ENCODE measurements at regions of chr13 and their contacts with region 1.

Region 1: DNA sequence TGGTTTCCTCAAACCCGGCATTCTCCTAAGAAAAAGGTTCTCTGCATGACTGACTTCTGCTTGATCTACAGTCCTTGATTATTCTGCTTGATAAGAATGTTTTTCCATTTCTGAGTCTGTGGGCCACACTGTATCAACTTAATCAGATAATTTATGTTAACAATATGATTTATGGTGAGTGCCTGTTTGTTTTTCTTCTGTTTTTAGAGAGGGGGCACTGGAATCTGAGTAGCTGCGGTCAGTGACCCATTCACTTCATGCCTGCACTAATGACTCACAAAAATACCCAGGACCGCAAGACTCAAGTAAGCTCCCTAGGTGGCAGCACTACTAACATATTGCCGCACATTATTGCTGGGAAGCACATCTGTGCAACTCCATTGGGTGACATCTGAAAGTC is 542.3 kb upstream of the ATXN8OS start:
- DNase-seq: peak; percentile 54 to 58
- H3K4me3 ChIP-seq: no peak overlapping the region
- H3K4me3 Mint-ChIP-seq: no peak overlapping the region
- H3K27ac Mint-ChIP-seq: no peak overlapping the region
- H3K4me1 ChIP-seq: no peaks in the 10 kb centered on the region
- H3K4me1 Mint-ChIP-seq: no peaks in the 10 kb centered on the region
- H3K27me3 ChIP-seq: no peaks in the 10 kb centered on the region
- H3K27me3 Mint-ChIP-seq: no peaks in the 10 kb centered on the region
- CTCF ChIP-seq: peak; percentile 52 to 63

Region 2: GRCh38 chr13:69579351-69579750 is 14.0 kb after region 1 on chr13:
- CTCF ChIA-PET with region 1: no interaction called
- POLR2A ChIA-PET with region 1: no interaction called
- intact Hi-C with region 1: loop called (anchors 2 kb)
- DNase-seq: no peak
- H3K4me3 ChIP-seq: no peak overlapping the region
- H3K4me3 Mint-ChIP-seq: no peak overlapping the region
- H3K27ac Mint-ChIP-seq: no peak overlapping the region
- H3K4me1 ChIP-seq: no peaks in the 10 kb centered on the region
- H3K4me1 Mint-ChIP-seq: no peaks in the 10 kb centered on the region
- H3K27me3 ChIP-seq: no peaks in the 10 kb centered on the region
- H3K27me3 Mint-ChIP-seq: peaks cover 6% of the 10 kb centered on the region
- CTCF ChIP-seq: peak in 1 of 2 experiments; percentile 8

Region 3: DNA sequence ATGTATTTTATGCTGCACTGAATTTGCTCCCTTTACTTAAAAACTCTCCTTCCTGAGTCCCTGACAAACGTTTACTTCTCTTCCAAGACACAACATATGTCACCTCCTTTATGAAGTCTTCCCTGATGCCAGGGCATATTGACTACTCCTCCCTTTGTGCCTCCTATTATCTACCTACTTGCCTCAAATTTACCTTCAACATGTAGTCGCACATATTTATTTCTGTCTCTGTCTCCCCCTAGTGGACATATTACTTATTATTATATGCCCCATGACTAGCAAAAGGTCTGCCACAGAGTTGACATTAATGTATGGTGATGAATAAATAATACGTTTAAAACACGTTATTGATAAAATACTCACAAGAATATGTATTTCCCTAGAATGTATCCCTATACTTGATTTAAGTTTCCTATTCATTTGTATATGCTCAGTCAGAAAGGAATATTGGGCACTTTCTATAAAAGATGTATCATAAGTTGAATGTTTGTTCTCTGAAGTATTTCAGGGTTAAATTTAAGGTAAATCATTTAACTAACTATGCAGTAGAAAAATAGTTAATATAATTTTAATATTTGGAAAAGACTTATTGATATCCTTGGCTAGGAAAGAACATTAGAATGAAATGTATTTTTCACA is 292.0 kb after region 1 on chr13:
- CTCF ChIA-PET with region 1: no interaction called
- POLR2A ChIA-PET with region 1: no interaction called
- intact Hi-C with region 1: loop called (anchors 1 kb)
- DNase-seq: peak in 1 of 2 experiments; percentile 54
- H3K4me3 ChIP-seq: no peak overlapping the region
- H3K4me3 Mint-ChIP-seq: peak overlapping the region; percentile 1
- H3K27ac Mint-ChIP-seq: peak overlapping the region; percentile 6
- H3K4me1 ChIP-seq: peaks cover 13% of the 10 kb centered on the region
- H3K4me1 Mint-ChIP-seq: peaks cover 11% of the 10 kb centered on the region
- H3K27me3 ChIP-seq: no peaks in the 10 kb centered on the region
- H3K27me3 Mint-ChIP-seq: no peaks in the 10 kb centered on the region
- CTCF ChIP-seq: peak; percentile 53 to 55

Measured in Caco-2 (cell line).